Activated naive CD4-positive, alpha-beta T cell treated with anti-CD3 and anti-CD28 coated beads for 36 hours (primary cell): ENCODE measurements at regions of chr11 and their contacts with region 1.

Region 1: DNA sequence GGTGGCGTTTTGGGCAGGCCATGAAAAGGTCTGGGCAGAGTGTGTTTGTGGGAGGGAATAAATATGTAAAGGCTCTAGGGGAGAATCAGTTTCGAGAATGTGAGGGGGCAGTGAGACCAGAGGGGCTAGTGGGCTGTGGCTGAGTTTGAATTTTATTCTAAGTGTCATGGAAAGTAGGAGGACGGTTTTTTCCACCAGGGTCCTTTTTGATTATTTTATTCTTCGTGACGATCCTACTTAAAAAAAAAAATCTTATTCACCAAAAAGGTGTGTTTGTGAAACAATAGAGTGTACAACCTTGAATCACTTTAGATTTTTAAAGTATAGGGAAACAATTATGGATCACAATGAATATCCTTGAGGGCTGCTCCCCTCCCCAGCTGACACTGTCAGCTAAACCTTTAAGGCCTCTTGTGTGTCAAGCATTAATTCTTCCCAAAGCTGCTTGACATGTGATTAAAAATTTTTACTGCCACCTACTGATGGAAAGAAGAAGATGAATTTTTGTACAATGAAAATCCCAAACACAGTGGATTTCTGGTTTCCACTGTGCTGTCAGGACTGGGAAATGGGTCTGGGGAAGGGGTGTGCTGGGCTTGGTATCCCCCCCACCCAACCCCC is 107.5 kb upstream of the OR4B1 start:
- DNase-seq: no peak
- H3K4me3 Mint-ChIP-seq: no peak overlapping the region
- H3K27ac Mint-ChIP-seq: peak overlapping the region; percentile 75
- H3K4me1 Mint-ChIP-seq: peaks cover 46% of the 10 kb centered on the region
- H3K27me3 Mint-ChIP-seq: no peaks in the 10 kb centered on the region

Region 2: GRCh38 chr11:47642099-47642855 is 466.9 kb before region 1 on chr11 and contains the start of gene MTCH2:
- CTCF ChIA-PET with region 1: no interaction called
- intact Hi-C with region 1: loop called (anchors 1 kb)
- DNase-seq: peak; percentile 97
- H3K4me3 Mint-ChIP-seq: peak within 1 kb of the TSS; percentile 91
- H3K27ac Mint-ChIP-seq: peak within 1 kb of the TSS; percentile 81
- H3K4me1 Mint-ChIP-seq: peaks cover 19% of the 10 kb centered on the region
- H3K27me3 Mint-ChIP-seq: no peaks in the 10 kb centered on the region
- total RNA-seq, gene MTCH2: 93.7 to 95.1 TPM

Region 3: GRCh38 chr11:47863189-47863892 is 245.8 kb before region 1 on chr11:
- CTCF ChIA-PET with region 1: interaction called, 4 read pairs
- intact Hi-C with region 1: loop called (anchors 1 kb)
- DNase-seq: no peak
- H3K4me3 Mint-ChIP-seq: no peak overlapping the region
- H3K27ac Mint-ChIP-seq: no peak overlapping the region
- H3K4me1 Mint-ChIP-seq: peaks cover 33% of the 10 kb centered on the region
- H3K27me3 Mint-ChIP-seq: no peaks in the 10 kb centered on the region

Region 4: DNA sequence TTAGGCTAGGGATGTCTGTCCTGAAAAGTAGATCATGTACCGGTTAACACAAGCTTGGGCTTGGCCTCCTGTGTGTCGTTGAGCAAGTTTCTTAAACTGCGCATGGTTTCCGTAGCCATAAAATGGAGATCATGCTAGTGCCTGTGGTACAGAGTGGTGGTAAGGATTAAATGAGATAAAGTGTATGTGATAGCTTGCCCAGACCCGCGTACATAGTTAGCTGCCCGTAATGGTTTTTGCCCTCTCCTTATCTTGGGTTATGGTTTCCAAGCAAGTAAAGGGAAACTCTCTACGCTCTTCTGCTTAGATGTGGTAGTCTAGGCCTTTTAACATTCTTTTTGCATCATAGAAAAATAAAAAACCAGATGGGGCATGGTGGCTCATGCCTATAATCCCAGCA is 139.8 kb before region 1 on chr11:
- CTCF ChIA-PET with region 1: interaction called, 10 read pairs
- intact Hi-C with region 1: loop called (anchors 1 kb)
- DNase-seq: no peak
- H3K4me3 Mint-ChIP-seq: no peak overlapping the region
- H3K27ac Mint-ChIP-seq: no peak overlapping the region
- H3K4me1 Mint-ChIP-seq: no peaks in the 10 kb centered on the region
- H3K27me3 Mint-ChIP-seq: no peaks in the 10 kb centered on the region

Region 5: GRCh38 chr11:48055292-48056132 is 53.6 kb before region 1 on chr11:
- CTCF ChIA-PET with region 1: interaction called, 23 read pairs
- intact Hi-C with region 1: loop called (anchors 1 kb)
- DNase-seq: peak; percentile 88
- H3K4me3 Mint-ChIP-seq: peak overlapping the region; percentile 54
- H3K27ac Mint-ChIP-seq: peak overlapping the region; percentile 76
- H3K4me1 Mint-ChIP-seq: peaks cover 84% of the 10 kb centered on the region
- H3K27me3 Mint-ChIP-seq: no peaks in the 10 kb centered on the region

Region 6: GRCh38 chr11:48270621-48271020 is 161.5 kb after region 1 on chr11:
- CTCF ChIA-PET with region 1: no interaction called
- intact Hi-C with region 1: no loop called
- DNase-seq: peak; percentile 5
- H3K4me3 Mint-ChIP-seq: no peak overlapping the region
- H3K27ac Mint-ChIP-seq: no peak overlapping the region
- H3K4me1 Mint-ChIP-seq: no peaks in the 10 kb centered on the region
- H3K27me3 Mint-ChIP-seq: peaks cover 2% of the 10 kb centered on the region